GM12878 (cell line): ENCODE measurements at regions of chr2 and their contacts with region 1.

Region 1: GRCh38 chr2:176126929-176127773 is 2.4 kb upstream of the HOXD8 start:
- DNase-seq: no peak
- ATAC-seq: peak; percentile 49; the same call in 2 of the 3 replicates
- H3K4me3 ChIP-seq: no peak overlapping the region
- H3K27ac ChIP-seq: no peak overlapping the region
- H3K4me1 ChIP-seq: no peaks in the 10 kb centered on the region
- H3K27me3 ChIP-seq: peaks cover 7 to 29% of the 10 kb centered on the region in 2 experiments
- CTCF ChIP-seq: peak; percentile 61 to 77 (median 66)
- EP300 ChIP-seq: no peak
- POLR2A ChIP-seq: no peak
- RAD21 ChIP-seq: peak; percentile 81

Region 2: DNA sequence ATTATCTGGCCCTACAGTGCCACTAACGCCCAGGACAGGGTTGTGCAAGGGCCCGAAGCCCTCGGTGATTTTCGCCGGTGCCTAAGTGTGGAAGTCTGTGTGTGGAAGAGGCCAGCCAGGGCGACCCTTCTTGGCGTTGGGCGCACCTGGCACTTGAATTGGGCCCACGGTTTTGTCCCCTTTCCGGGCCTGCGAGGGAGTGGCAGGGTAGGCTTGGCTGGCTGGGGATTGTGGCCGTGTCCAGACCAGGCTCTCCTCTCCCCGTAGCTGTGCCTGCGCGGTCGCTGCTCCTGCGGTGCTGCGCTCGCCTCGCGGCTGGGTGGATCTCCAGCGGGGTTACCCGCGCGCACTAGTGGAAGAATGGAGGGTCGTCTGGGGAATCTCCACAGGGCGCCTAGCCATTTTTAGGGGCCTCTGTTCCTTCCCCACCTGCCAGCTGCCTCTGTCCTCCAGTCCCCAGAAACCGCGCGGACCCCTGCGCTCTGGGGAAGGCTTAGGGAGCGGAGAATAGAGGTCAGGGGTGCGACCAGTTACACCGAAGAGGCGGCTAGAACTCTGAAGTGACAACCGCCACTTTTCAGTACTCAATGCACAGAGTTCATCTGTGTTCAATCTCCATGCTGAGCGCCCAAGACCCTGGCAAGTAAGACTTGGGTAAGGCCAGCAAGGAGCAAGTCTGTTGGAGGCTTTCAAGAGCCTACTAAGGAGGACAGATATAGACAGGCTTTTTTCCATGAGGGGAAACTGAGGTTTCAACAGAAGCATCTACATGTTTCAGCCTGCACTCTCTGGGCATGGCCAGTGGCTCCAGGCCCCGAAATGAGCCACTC is 59.3 kb before region 1 on chr2:
- CTCF ChIA-PET with region 1: no interaction called
- POLR2A ChIA-PET with region 1: no interaction called
- RAD21 ChIA-PET with region 1: no interaction called
- SMC1A ChIA-PET with region 1: no interaction called
- in situ Hi-C with region 1: no loop called
- intact Hi-C with region 1: no loop called
- DNase-seq: no peak
- ATAC-seq: no peak
- H3K4me3 ChIP-seq: no peak overlapping the region
- H3K27ac ChIP-seq: no peak overlapping the region
- H3K4me1 ChIP-seq: no peaks in the 10 kb centered on the region; the same call in 1 of the 2 replicates
- H3K27me3 ChIP-seq: peaks cover 15 to 34% of the 10 kb centered on the region in 2 experiments
- CTCF ChIP-seq: no peak
- EP300 ChIP-seq: no peak
- POLR2A ChIP-seq: no peak
- RAD21 ChIP-seq: no peak

Region 3: GRCh38 chr2:176110975-176111663 is 16.0 kb before region 1 on chr2:
- CTCF ChIA-PET with region 1: interaction called, 12 read pairs
- POLR2A ChIA-PET with region 1: no interaction called
- RAD21 ChIA-PET with region 1: no interaction called
- SMC1A ChIA-PET with region 1: interaction called, 7 read pairs
- in situ Hi-C with region 1: no loop called
- intact Hi-C with region 1: no loop called
- DNase-seq: no peak
- ATAC-seq: peak; percentile 79
- H3K4me3 ChIP-seq: no peak overlapping the region
- H3K27ac ChIP-seq: no peak overlapping the region
- H3K4me1 ChIP-seq: no peaks in the 10 kb centered on the region
- H3K27me3 ChIP-seq: peaks cover 14 to 35% of the 10 kb centered on the region in 2 experiments
- CTCF ChIP-seq: peak; percentile 60 to 79 (median 60); a peak in 5 of 6 replicates
- EP300 ChIP-seq: no peak
- POLR2A ChIP-seq: no peak
- RAD21 ChIP-seq: 0 out of 2 replicates have a peak, but pooled peaks have one; percentile 24

Region 4: DNA sequence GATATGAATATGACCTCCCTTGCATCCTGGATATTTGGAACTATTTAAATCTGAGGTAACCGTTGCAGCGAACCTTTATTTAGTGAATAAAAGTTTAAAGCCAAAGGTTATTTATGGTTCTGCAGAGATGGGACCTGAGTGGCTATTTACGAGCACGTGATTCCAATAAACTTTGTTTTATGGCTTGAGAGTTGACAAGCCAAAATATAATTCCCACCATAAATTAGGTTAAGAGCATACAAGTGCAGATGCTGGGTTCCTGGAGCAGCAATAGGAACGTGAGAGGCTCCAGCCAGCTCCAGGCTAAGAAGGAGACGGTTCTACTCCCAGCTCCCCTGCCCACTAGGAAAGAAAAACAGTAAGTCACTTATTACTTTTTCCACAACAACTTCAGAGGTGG is 18.9 kb after region 1 on chr2:
- CTCF ChIA-PET with region 1: interaction called, 22 read pairs
- POLR2A ChIA-PET with region 1: no interaction called
- RAD21 ChIA-PET with region 1: interaction called, 5 read pairs
- SMC1A ChIA-PET with region 1: interaction called, 10 read pairs
- in situ Hi-C with region 1: no loop called
- intact Hi-C with region 1: no loop called
- DNase-seq: no peak
- ATAC-seq: no peak
- H3K4me3 ChIP-seq: no peak overlapping the region
- H3K27ac ChIP-seq: no peak overlapping the region
- H3K4me1 ChIP-seq: no peaks in the 10 kb centered on the region
- H3K27me3 ChIP-seq: peaks cover 10 to 28% of the 10 kb centered on the region in 2 experiments
- CTCF ChIP-seq: no peak
- EP300 ChIP-seq: no peak
- POLR2A ChIP-seq: no peak
- RAD21 ChIP-seq: no peak

Region 5: DNA sequence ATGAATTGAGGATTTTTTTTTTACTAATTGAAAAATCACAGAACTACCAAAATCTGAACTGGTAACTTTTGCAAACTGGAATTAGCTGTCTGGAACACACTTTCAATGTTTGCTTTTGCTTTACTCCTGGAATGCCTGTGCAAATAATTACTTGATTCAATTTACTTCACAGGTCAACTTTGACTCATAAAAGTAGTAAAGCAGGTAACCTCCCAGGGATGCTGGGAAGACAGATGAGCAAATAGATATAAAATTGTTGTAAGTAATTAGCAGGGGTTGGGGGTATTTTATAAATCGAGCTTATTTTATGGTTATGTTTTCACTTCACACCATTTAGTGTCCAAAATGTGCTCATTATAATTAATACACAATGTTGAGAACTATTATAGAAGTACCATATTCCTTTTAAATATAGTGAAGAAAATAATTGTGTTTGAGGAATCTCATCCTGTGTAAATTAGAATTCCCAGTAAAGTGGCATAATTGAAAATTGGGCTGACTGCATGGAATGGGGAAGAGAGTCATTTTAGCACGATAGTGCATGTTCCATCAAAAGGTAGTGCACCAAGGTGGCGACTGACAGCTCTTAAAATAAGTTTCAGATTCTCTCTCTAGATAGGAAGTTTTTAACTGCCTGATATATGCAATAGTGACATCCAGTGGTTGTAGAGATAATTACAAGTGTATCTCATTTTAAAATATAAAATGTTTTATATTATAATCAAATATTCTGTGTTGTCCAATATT is 687.3 kb after region 1 on chr2:
- CTCF ChIA-PET with region 1: interaction called, 22 read pairs
- POLR2A ChIA-PET with region 1: no interaction called
- RAD21 ChIA-PET with region 1: interaction called, 8 read pairs
- SMC1A ChIA-PET with region 1: interaction called, 11 read pairs
- in situ Hi-C with region 1: no loop called
- intact Hi-C with region 1: loop called (anchors 5 kb)
- DNase-seq: peak; percentile 8
- ATAC-seq: peak; percentile 80
- H3K4me3 ChIP-seq: no peak overlapping the region
- H3K27ac ChIP-seq: no peak overlapping the region
- H3K4me1 ChIP-seq: no peaks in the 10 kb centered on the region
- H3K27me3 ChIP-seq: no peaks in the 10 kb centered on the region
- CTCF ChIP-seq: peak; percentile 42 to 54 (median 48); a peak in 5 of 6 replicates
- EP300 ChIP-seq: no peak
- POLR2A ChIP-seq: no peak
- RAD21 ChIP-seq: peak; percentile 79

Region 6: DNA sequence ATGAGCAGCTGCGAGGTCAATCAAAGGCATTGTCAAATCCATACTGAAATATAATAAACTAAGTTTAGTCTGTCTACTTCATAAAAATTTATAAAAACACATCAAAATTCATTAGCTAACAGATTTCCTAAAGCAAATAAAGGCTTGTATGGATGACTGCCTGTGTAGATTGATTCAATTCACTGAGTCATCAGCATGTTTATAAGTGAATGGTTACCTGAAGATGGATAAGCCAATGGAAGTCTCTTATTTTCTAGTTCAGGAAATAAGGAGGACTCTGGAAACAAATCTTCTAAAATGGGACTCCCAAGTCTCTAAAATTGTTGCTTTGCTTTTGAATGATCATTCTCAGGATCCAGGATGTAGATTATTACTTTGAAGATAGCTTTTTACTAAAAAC is 1028.5 kb after region 1 on chr2:
- CTCF ChIA-PET with region 1: interaction called, 40 read pairs
- POLR2A ChIA-PET with region 1: no interaction called
- RAD21 ChIA-PET with region 1: interaction called, 3 read pairs
- SMC1A ChIA-PET with region 1: no interaction called
- in situ Hi-C with region 1: loop called (anchors 5 kb)
- intact Hi-C with region 1: loop called (anchors 5 kb)
- DNase-seq: no peak
- ATAC-seq: no peak
- H3K4me3 ChIP-seq: no peak overlapping the region
- H3K27ac ChIP-seq: no peak overlapping the region
- H3K4me1 ChIP-seq: no peaks in the 10 kb centered on the region
- H3K27me3 ChIP-seq: no peaks in the 10 kb centered on the region
- CTCF ChIP-seq: no peak
- EP300 ChIP-seq: no peak
- POLR2A ChIP-seq: no peak
- RAD21 ChIP-seq: no peak